Activated naive CD4-positive, alpha-beta T cell treated with anti-CD3 and anti-CD28 coated beads for 36 hours (primary cell): ENCODE measurements at regions of chr10 and their contacts with region 1.

Region 1: GRCh38 chr10:27504007-27504807 is at the start of gene RAB18:
- DNase-seq: peak; percentile 99
- H3K4me3 Mint-ChIP-seq: peak within 1 kb of the TSS; percentile 99
- H3K27ac Mint-ChIP-seq: peak within 1 kb of the TSS; percentile 92
- H3K4me1 Mint-ChIP-seq: peaks cover 41% of the 10 kb centered on the region
- H3K27me3 Mint-ChIP-seq: no peaks in the 10 kb centered on the region
- total RNA-seq, gene RAB18: 35.4 to 41.3 TPM

Region 2: GRCh38 chr10:27155066-27155754 is 349.0 kb before region 1 on chr10 and contains the start of gene MASTL:
- CTCF ChIA-PET with region 1: no interaction called
- intact Hi-C with region 1: loop called (anchors 1 kb)
- DNase-seq: peak; percentile 95
- H3K4me3 Mint-ChIP-seq: peak within 1 kb of the TSS; percentile 94
- H3K27ac Mint-ChIP-seq: peak within 1 kb of the TSS; percentile 100
- H3K4me1 Mint-ChIP-seq: peaks cover 46% of the 10 kb centered on the region
- H3K27me3 Mint-ChIP-seq: no peaks in the 10 kb centered on the region
- total RNA-seq, gene MASTL: 50.7 to 51.3 TPM

Region 3: GRCh38 chr10:27319752-27320561 is 184.2 kb before region 1 on chr10:
- CTCF ChIA-PET with region 1: no interaction called
- intact Hi-C with region 1: no loop called
- DNase-seq: peak; percentile 53
- H3K4me3 Mint-ChIP-seq: peak overlapping the region; percentile 13
- H3K27ac Mint-ChIP-seq: no peak overlapping the region
- H3K4me1 Mint-ChIP-seq: peaks cover 8% of the 10 kb centered on the region
- H3K27me3 Mint-ChIP-seq: peaks cover 8% of the 10 kb centered on the region

Region 4: GRCh38 chr10:27464993-27465392 is 39.2 kb before region 1 on chr10:
- CTCF ChIA-PET with region 1: interaction called, 3 read pairs
- intact Hi-C with region 1: loop called (anchors 1 kb)
- DNase-seq: peak; percentile 28
- H3K4me3 Mint-ChIP-seq: peak overlapping the region; percentile 22
- H3K27ac Mint-ChIP-seq: peak overlapping the region; percentile 27
- H3K4me1 Mint-ChIP-seq: peaks cover 25% of the 10 kb centered on the region
- H3K27me3 Mint-ChIP-seq: no peaks in the 10 kb centered on the region

Region 5: GRCh38 chr10:27482984-27483956 is 20.9 kb before region 1 on chr10:
- CTCF ChIA-PET with region 1: no interaction called
- intact Hi-C with region 1: no loop called
- DNase-seq: no peak
- H3K4me3 Mint-ChIP-seq: no peak overlapping the region
- H3K27ac Mint-ChIP-seq: no peak overlapping the region
- H3K4me1 Mint-ChIP-seq: no peaks in the 10 kb centered on the region
- H3K27me3 Mint-ChIP-seq: no peaks in the 10 kb centered on the region

Region 6: GRCh38 chr10:27742195-27743011 is 238.2 kb after region 1 on chr10:
- CTCF ChIA-PET with region 1: no interaction called
- intact Hi-C with region 1: loop called (anchors 1 kb)
- DNase-seq: peak; percentile 88
- H3K4me3 Mint-ChIP-seq: peak overlapping the region; percentile 68
- H3K27ac Mint-ChIP-seq: no peak overlapping the region
- H3K4me1 Mint-ChIP-seq: peaks cover 31% of the 10 kb centered on the region
- H3K27me3 Mint-ChIP-seq: peaks cover 49% of the 10 kb centered on the region